ENCODE measurements at regions of chr12 and their contacts with region 1.

Region 1: DNA sequence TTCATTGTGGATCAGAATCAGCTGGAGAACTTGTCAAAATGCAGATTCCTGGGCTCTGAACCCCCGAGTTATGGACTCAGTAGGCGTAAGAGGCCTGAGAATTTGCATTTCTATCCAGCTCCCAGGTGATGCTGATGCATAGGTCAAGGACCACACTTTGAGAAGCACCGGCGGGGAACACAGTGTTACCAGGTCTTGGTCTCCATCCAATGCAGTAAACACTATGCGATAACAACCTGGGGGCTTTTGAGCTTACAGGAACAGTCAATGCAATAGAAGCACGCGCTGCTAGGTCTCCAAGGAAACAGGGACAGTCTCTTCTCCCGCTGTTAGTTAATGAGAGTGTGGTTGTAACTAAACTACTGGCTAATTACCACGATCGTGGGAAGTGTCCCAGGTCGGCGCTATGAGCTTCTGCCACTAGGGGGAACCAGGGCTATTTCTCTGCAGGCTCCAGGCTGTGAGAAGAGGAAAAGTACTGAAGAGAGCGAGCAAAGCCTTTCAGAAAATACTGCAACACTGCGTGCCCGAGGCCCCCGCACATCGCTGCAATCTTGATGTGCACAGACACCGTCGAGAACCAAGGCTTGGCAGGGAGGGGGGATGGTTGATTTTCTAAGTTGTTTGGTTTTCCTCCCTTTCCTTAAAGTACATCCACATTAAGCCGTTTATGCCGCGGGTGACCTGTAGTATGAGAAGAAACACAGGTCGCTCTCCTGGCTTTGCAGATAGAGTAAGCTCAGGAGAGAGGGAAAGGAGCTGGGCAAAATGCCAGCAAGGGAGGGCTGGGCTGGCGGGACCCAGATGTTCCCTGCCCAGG is 52.0 kb upstream of the KCNA1 start:
- DNase-seq: peak; percentile 50 to 92
- H3K4me3 ChIP-seq: peak overlapping the region in 2 of 4 experiments; percentile 34 to 45; a peak in 5 of 8 replicates
- H3K27ac ChIP-seq: no peak overlapping the region
- H3K4me1 ChIP-seq: peaks cover 2 to 14% (median 6%) of the 10 kb centered on the region in 4 experiments; a peak in 6 of 7 replicates
- H3K27me3 ChIP-seq: peaks cover 0 to 13% (median 6%) of the 10 kb centered on the region in 4 experiments; a peak in 4 of 7 replicates
- CTCF ChIP-seq: peak; percentile 76 to 94 (median 91)
- EP300 ChIP-seq: 0 out of 3 replicates have a peak, but pooled peaks of 1 of the 2 experiments have one; percentile 17
- POLR2A ChIP-seq: no peak
- RAD21 ChIP-seq: peak; percentile 79 to 80

Region 2: DNA sequence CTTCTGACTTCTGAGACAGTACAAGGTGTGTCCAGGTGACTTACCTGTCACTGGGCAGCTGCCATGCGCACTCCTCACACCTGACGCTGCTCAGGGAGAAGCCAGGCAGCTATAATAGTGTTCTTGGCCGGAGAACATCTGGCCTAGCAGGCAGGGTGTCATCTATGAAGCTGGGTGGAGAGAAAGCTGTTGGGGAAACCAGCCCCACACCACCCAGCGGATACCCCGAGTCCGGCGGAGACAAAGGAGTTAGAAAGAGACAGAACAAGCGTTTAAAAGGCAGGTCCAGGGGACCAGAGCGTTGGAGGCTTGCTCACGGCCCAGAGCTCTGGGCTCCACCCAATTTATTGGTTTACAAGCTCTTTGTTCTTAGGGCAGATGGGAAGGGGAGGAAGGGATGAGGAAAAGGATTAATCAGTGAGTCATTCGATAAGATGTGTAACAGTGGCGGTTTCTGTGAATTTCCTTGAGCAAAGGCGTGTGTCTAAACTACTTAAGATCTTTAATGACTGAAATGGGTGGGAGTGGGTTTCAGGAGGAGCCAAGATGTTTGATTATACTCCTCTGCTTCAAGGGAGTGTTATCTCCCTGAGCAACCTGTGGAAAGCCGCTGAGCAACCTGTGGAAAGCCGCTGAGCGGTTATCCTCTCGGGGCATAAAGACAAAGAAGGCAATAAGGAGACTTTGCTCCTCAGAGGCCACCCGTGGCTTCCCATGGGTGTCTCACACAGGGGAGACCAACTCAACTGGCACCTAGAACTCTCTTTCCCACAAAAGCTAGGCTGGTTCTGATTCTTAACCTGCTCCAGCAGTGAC is 137.7 kb before region 1 on chr12 and contains the start of gene GALNT8:
- CTCF ChIA-PET with region 1: no interaction called
- POLR2A ChIA-PET with region 1: no interaction called
- DNase-seq: peak in 1 of 2 experiments; percentile 55
- H3K4me3 ChIP-seq: peak within 1 kb of the TSS in 2 of 4 experiments; percentile 8 to 34; a peak in 3 of 8 replicates
- H3K27ac ChIP-seq: peak within 1 kb of the TSS; percentile 82
- H3K4me1 ChIP-seq: peaks cover 6 to 25% (median 18%) of the 10 kb centered on the region in 4 experiments
- H3K27me3 ChIP-seq: no peaks in the 10 kb centered on the region
- CTCF ChIP-seq: no peak
- EP300 ChIP-seq: no peak
- POLR2A ChIP-seq: no peak
- RAD21 ChIP-seq: no peak
- total RNA-seq, gene GALNT8: 5.4 and 8.3 TPM in 2 replicates

Region 3: DNA sequence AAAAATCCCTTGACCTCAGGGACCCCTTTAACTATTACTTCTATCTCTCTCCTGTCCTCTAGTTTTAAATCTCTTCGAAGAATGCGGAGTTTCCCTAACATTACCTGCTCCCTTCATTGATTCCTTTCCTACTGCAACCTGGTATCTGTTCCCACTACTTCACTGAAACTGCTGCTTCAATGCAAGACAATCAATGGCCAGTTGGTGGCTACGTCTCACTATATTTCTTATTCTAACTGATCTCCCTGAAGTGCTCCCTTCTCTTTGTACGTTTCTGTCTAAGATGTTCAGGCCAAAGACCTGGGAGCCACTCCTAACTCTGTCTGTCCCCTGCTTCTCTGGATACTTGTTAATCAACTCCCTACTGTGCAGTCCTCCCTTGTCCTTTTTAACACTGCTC is 41.7 kb after region 1 on chr12:
- CTCF ChIA-PET with region 1: interaction called, 10 read pairs
- POLR2A ChIA-PET with region 1: interaction called, 3 read pairs
- DNase-seq: no peak
- H3K4me3 ChIP-seq: no peak overlapping the region
- H3K27ac ChIP-seq: no peak overlapping the region
- H3K4me1 ChIP-seq: no peaks in the 10 kb centered on the region
- H3K27me3 ChIP-seq: no peaks in the 10 kb centered on the region
- CTCF ChIP-seq: peak in 2 of 3 experiments; percentile 30 to 55; a peak in 2 of 4 replicates
- EP300 ChIP-seq: no peak
- POLR2A ChIP-seq: no peak
- RAD21 ChIP-seq: peak; percentile 39 to 52; a peak in 3 of 4 replicates

Region 4: GRCh38 chr12:4932576-4932975 is 74.9 kb after region 1 on chr12:
- CTCF ChIA-PET with region 1: interaction called, 45 read pairs
- POLR2A ChIA-PET with region 1: no interaction called
- DNase-seq: no peak
- H3K4me3 ChIP-seq: no peak overlapping the region
- H3K27ac ChIP-seq: no peak overlapping the region
- H3K4me1 ChIP-seq: no peaks in the 10 kb centered on the region
- H3K27me3 ChIP-seq: no peaks in the 10 kb centered on the region; a peak in 1 of 7 replicates
- CTCF ChIP-seq: no peak
- EP300 ChIP-seq: no peak
- POLR2A ChIP-seq: no peak
- RAD21 ChIP-seq: no peak

Region 5: GRCh38 chr12:4975574-4975973 is 117.9 kb after region 1 on chr12:
- CTCF ChIA-PET with region 1: interaction called, 14 read pairs
- POLR2A ChIA-PET with region 1: no interaction called
- DNase-seq: peak in 1 of 2 experiments; percentile 51
- H3K4me3 ChIP-seq: no peak overlapping the region
- H3K27ac ChIP-seq: no peak overlapping the region
- H3K4me1 ChIP-seq: peaks cover 0 to 9% (median 2%) of the 10 kb centered on the region in 4 experiments; a peak in 2 of 7 replicates
- H3K27me3 ChIP-seq: no peaks in the 10 kb centered on the region; a peak in 1 of 7 replicates
- CTCF ChIP-seq: no peak
- EP300 ChIP-seq: no peak
- POLR2A ChIP-seq: no peak
- RAD21 ChIP-seq: no peak

Region 6: GRCh38 chr12:5003020-5003666 is 145.5 kb after region 1 on chr12:
- CTCF ChIA-PET with region 1: interaction called, 97 read pairs
- POLR2A ChIA-PET with region 1: no interaction called
- DNase-seq: peak; percentile 54 to 85
- H3K4me3 ChIP-seq: no peak overlapping the region
- H3K27ac ChIP-seq: no peak overlapping the region
- H3K4me1 ChIP-seq: peaks cover 0 to 7% (median 0%) of the 10 kb centered on the region in 4 experiments; a peak in 1 of 7 replicates
- H3K27me3 ChIP-seq: no peaks in the 10 kb centered on the region
- CTCF ChIP-seq: peak; percentile 99
- EP300 ChIP-seq: no peak
- POLR2A ChIP-seq: no peak
- RAD21 ChIP-seq: peak; percentile 100

Region 7: DNA sequence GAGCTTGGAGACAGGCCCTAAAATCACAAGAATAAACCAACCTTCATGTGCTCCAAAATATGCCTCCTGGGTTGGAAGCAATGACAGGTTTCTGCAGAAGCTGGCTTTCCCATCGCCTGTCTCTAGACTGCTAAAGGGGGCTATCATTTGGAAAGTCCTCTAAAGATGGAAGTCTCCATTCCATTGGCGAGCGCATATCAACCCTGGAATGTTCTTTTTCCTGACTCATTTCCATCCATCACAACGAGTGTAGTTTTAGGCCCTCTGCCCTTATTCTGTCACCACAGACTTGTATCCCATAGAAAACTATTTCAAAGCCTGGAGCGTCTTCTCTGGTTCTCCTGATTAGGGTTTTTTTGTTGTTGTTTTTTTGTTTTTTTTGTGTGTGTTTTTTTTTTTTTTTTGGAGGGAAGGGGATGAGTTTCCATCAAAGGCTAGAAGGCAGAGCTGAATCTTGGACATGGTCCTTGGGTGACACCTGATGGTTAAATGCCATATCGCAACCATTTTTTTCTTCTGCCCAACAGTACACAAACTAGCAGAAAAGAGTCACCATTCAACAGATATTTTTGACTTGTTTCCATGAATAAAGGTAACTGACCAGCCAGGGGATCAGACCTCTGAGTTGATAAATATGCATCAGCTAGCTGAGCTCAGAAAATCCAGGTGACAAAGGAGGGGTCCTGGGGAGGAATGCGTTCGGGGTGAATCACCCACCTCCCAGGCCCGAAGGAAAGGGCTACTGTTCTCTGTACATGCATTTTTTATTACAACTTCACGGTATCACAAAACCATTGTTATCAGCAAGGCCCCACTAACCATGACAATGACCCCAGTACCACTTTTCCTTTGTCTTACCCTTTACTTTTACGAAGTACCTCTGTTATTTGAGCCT is 226.5 kb after region 1 on chr12:
- CTCF ChIA-PET with region 1: interaction called, 76 read pairs
- POLR2A ChIA-PET with region 1: no interaction called
- DNase-seq: peak in 1 of 2 experiments; percentile 65
- H3K4me3 ChIP-seq: no peak overlapping the region
- H3K27ac ChIP-seq: no peak overlapping the region
- H3K4me1 ChIP-seq: peaks cover 0 to 5% (median 0%) of the 10 kb centered on the region in 4 experiments; a peak in 1 of 7 replicates
- H3K27me3 ChIP-seq: no peaks in the 10 kb centered on the region
- CTCF ChIP-seq: peak in 2 of 3 experiments; percentile 66 to 71; a peak in 3 of 4 replicates
- EP300 ChIP-seq: no peak
- POLR2A ChIP-seq: no peak
- RAD21 ChIP-seq: peak; percentile 85 to 88